PC-9 (cell line): ENCODE measurements at regions of chr1 and their contacts with region 1.

Region 1: GRCh38 chr1:203512830-203513611 is 19.1 kb downstream of the OPTC start:
- DNase-seq: peak; percentile 86 to 95
- H3K4me3 ChIP-seq: peak overlapping the region; percentile 49; the same call in 1 of the 2 replicates
- H3K27ac ChIP-seq: peak overlapping the region; percentile 97
- H3K4me1 ChIP-seq: peaks cover 83% of the 10 kb centered on the region
- H3K27me3 ChIP-seq: no peaks in the 10 kb centered on the region
- CTCF ChIP-seq: no peak

Region 2: GRCh38 chr1:203558064-203558760 is 45.2 kb after region 1 on chr1:
- CTCF ChIA-PET with region 1: no interaction called
- POLR2A ChIA-PET with region 1: interaction called, 3 read pairs
- intact Hi-C with region 1: loop called (anchors 5 kb)
- DNase-seq: peak; percentile 59 to 99
- H3K4me3 ChIP-seq: no peak overlapping the region
- H3K27ac ChIP-seq: peak overlapping the region; percentile 76
- H3K4me1 ChIP-seq: peaks cover 59% of the 10 kb centered on the region
- H3K27me3 ChIP-seq: no peaks in the 10 kb centered on the region
- CTCF ChIP-seq: no peak

Region 3: DNA sequence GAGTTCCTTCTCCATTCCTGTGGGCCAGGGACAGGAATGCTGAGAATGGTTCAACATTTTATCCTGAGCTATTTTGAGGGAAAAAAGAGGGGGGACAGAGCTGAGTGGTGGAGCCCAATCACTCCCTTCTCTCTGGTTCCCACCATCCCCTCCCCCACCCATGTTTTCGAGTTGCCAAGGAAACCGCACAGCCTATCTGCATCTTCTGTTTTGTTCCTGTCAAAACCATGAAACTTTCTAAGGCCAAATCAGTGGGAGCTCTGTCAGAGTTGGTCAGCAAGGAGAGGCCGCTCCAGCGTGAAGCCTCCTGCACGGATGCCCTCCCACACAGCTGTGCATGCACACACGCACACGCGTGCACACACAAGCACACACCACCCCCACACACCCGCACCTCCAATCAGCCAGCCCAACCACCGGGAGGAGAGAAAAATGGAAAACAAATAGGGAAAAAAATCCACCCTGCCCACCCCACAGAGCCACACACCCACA is 59.2 kb after region 1 on chr1:
- CTCF ChIA-PET with region 1: no interaction called
- POLR2A ChIA-PET with region 1: interaction called, 11 read pairs
- intact Hi-C with region 1: no loop called
- DNase-seq: no peak
- H3K4me3 ChIP-seq: no peak overlapping the region
- H3K27ac ChIP-seq: no peak overlapping the region
- H3K4me1 ChIP-seq: peaks cover 28% of the 10 kb centered on the region
- H3K27me3 ChIP-seq: no peaks in the 10 kb centered on the region
- CTCF ChIP-seq: no peak

Region 4: DNA sequence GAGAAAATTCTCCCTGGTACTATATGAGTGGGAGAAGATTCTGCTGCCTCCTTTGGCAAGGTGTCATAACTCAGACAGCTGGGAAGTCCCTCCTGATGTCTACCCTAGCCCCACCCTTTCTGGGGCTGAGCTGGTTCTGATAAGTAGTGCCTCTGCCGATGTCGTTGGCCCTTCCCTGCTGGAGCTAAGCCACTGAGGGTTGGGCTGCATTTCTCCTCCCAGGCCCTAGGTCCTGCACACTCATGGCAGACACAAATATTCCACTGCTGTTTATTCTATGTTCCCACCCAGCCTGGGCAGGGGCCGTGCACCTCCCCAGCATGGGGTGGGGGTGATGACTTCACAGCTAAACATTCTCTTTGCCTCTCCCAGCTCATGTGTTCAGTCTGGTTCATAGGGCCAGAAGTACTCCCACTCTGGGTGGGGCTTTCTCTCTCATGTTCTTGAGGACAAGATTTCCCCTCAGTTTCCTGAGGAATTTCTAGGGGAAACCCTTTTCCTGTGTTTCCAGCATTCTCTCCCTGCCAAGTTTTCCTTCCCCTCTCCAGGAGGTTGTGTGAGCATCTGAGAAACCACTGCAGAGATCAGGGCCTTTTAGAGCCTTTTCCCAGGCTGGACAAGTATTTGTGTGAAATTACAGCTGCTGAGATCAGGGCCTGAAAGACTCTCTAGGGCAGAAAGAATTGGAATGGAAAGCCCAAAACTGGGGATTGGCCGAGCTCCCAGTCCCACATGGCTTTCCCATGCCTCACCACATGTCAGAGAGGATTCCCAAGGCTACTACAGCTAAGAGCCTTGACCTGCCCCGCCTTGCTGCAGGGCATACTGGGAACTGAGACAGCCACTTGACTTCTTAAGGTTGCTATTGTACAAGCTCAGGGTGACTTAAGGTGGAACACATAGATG is 179.8 kb after region 1 on chr1:
- CTCF ChIA-PET with region 1: interaction called, 3 read pairs
- POLR2A ChIA-PET with region 1: no interaction called
- intact Hi-C with region 1: loop called (anchors 5 kb)
- DNase-seq: peak; percentile 79 to 80
- H3K4me3 ChIP-seq: no peak overlapping the region
- H3K27ac ChIP-seq: peak overlapping the region; percentile 80
- H3K4me1 ChIP-seq: peaks cover 17% of the 10 kb centered on the region
- H3K27me3 ChIP-seq: no peaks in the 10 kb centered on the region
- CTCF ChIP-seq: no peak